GM10248 (cell line): ENCODE measurements at regions of chr11 and their contacts with region 1.

Region 1: DNA sequence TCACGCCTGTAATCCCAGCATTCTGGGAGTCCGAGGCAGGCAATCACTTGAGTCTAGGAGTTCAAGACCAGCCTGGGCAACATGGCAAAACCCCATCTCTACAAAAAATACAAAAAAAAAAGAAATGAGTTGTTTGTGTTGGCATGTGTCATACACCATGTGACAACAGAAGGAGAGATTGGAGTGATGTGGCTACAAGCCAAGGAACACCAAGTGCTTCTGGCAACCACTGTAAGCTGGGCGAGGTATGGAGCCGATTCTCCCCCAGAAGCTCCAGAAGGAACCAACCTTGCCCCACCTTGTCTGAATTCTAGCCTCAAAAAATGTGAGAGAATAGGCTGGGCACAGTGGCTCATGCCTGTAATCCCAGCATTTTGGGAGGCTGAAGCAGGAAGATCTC is 39.1 kb upstream of the SLC35C1 start:
- DNase-seq: no peak
- CTCF ChIP-seq: no peak

Region 2: GRCh38 chr11:45724145-45724544 is 41.7 kb before region 1 on chr11:
- CTCF ChIA-PET with region 1: no interaction called
- POLR2A ChIA-PET with region 1: no interaction called
- DNase-seq: no peak
- CTCF ChIP-seq: no peak

Region 3: GRCh38 chr11:45754261-45754709 is 11.6 kb before region 1 on chr11:
- CTCF ChIA-PET with region 1: interaction called, 43 read pairs
- POLR2A ChIA-PET with region 1: no interaction called
- DNase-seq: no peak
- CTCF ChIP-seq: no peak